HCT116 (cell line): ENCODE measurements at regions of chr17 and their contacts with region 1.

Region 1: GRCh38 chr17:75319904-75320691 is 30.9 kb upstream of the SLC25A19 start:
- DNase-seq: no peak
- ATAC-seq: no peak
- H3K4me3 ChIP-seq: no peak overlapping the region
- H3K27ac ChIP-seq: no peak overlapping the region
- H3K4me1 ChIP-seq: peaks cover 0 to 8% of the 10 kb centered on the region in 2 experiments; a peak in 1 of 4 replicates
- H3K27me3 ChIP-seq: no peaks in the 10 kb centered on the region
- CTCF ChIP-seq: no peak
- POLR2A ChIP-seq: no peak
- RAD21 ChIP-seq: no peak

Region 2: GRCh38 chr17:75277664-75278071 is 42.4 kb before region 1 on chr17:
- CTCF ChIA-PET with region 1: no interaction called
- POLR2A ChIA-PET with region 1: no interaction called
- RAD21 ChIA-PET with region 1: no interaction called
- intact Hi-C with region 1: no loop called
- DNase-seq: no peak
- ATAC-seq: no peak
- H3K4me3 ChIP-seq: no peak overlapping the region
- H3K27ac ChIP-seq: no peak overlapping the region
- H3K4me1 ChIP-seq: peaks cover 0 to 8% of the 10 kb centered on the region in 2 experiments; a peak in 1 of 4 replicates
- H3K27me3 ChIP-seq: no peaks in the 10 kb centered on the region
- CTCF ChIP-seq: no peak
- POLR2A ChIP-seq: no peak
- RAD21 ChIP-seq: no peak

Region 3: GRCh38 chr17:75405365-75406221 is 85.5 kb after region 1 on chr17 and contains the start of gene GRB2:
- CTCF ChIA-PET with region 1: interaction called, 13 read pairs
- POLR2A ChIA-PET with region 1: no interaction called
- RAD21 ChIA-PET with region 1: no interaction called
- intact Hi-C with region 1: loop called (anchors 1 kb)
- DNase-seq: peak; percentile 94
- ATAC-seq: peak; percentile 92
- H3K4me3 ChIP-seq: peak within 1 kb of the TSS; percentile 97
- H3K27ac ChIP-seq: peak within 1 kb of the TSS; percentile 87
- H3K4me1 ChIP-seq: peaks cover 5 to 19% of the 10 kb centered on the region in 2 experiments
- H3K27me3 ChIP-seq: no peaks in the 10 kb centered on the region
- CTCF ChIP-seq: no peak
- POLR2A ChIP-seq: peak; percentile 68
- RAD21 ChIP-seq: no peak
- total RNA-seq, gene GRB2: 146 TPM

Region 4: GRCh38 chr17:75412455-75413317 is 92.6 kb after region 1 on chr17:
- CTCF ChIA-PET with region 1: interaction called, 13 read pairs
- POLR2A ChIA-PET with region 1: no interaction called
- RAD21 ChIA-PET with region 1: no interaction called
- intact Hi-C with region 1: loop called (anchors 1 kb)
- DNase-seq: peak; percentile 75
- ATAC-seq: peak; percentile 93
- H3K4me3 ChIP-seq: peak overlapping the region; percentile 12 to 17; a peak in 2 of 4 replicates
- H3K27ac ChIP-seq: no peak overlapping the region
- H3K4me1 ChIP-seq: peaks cover 0 to 11% of the 10 kb centered on the region in 2 experiments; a peak in 2 of 4 replicates
- H3K27me3 ChIP-seq: peaks cover 5% of the 10 kb centered on the region; the same call in 1 of the 2 replicates
- CTCF ChIP-seq: peak; percentile 91 to 96 (median 91)
- POLR2A ChIP-seq: no peak
- RAD21 ChIP-seq: peak; percentile 99

Region 5: GRCh38 chr17:75491680-75492079 is 171.6 kb after region 1 on chr17:
- CTCF ChIA-PET with region 1: no interaction called
- POLR2A ChIA-PET with region 1: no interaction called
- RAD21 ChIA-PET with region 1: no interaction called
- intact Hi-C with region 1: no loop called
- DNase-seq: no peak
- ATAC-seq: no peak
- H3K4me3 ChIP-seq: no peak overlapping the region
- H3K27ac ChIP-seq: no peak overlapping the region
- H3K4me1 ChIP-seq: no peaks in the 10 kb centered on the region
- H3K27me3 ChIP-seq: no peaks in the 10 kb centered on the region
- CTCF ChIP-seq: no peak
- POLR2A ChIP-seq: no peak
- RAD21 ChIP-seq: no peak